ENCODE measurements at regions of chr15 and their contacts with region 1.

Region 1: GRCh38 chr15:44066316-44066740 is 128.7 kb downstream of the FRMD5 start:
- DNase-seq: peak in 1 of 2 donors; percentile 54
- ATAC-seq: peak in 4 of 8 donors; percentile 44 to 65 (median 54)
- H3K4me3 ChIP-seq: no peak overlapping the region
- H3K27ac ChIP-seq: no peak overlapping the region
- H3K4me1 ChIP-seq: peaks cover 0 to 4% (median 0%) of the 10 kb centered on the region in 9 donors
- H3K27me3 ChIP-seq: peaks cover 0 to 6% (median 0%) of the 10 kb centered on the region in 7 donors
- CTCF ChIP-seq: peak; percentile 49 to 78 (median 72)

Region 2: GRCh38 chr15:43872416-43873020 is 193.8 kb before region 1 on chr15:
- intact Hi-C with region 1: loop called in 3 of 10 experiments (anchors 10 kb)
- DNase-seq: peak in 1 of 2 donors; percentile 57
- ATAC-seq: peak; percentile 65 to 81 (median 70)
- H3K4me3 ChIP-seq: no peak overlapping the region
- H3K27ac ChIP-seq: peak overlapping the region in 1 of 10 donors; percentile 36
- H3K4me1 ChIP-seq: peaks cover 0 to 53% (median 3%) of the 10 kb centered on the region in 9 donors
- H3K27me3 ChIP-seq: no peaks in the 10 kb centered on the region
- CTCF ChIP-seq: peak in 8 of 9 donors; percentile 18 to 67 (median 62)

Region 3: GRCh38 chr15:43903864-43904290 is 162.5 kb before region 1 on chr15:
- intact Hi-C with region 1: loop called (anchors 1 to 10 kb)
- DNase-seq: peak in 1 of 2 donors; percentile 50
- ATAC-seq: peak; percentile 65 to 85 (median 80)
- H3K4me3 ChIP-seq: no peak overlapping the region
- H3K27ac ChIP-seq: no peak overlapping the region
- H3K4me1 ChIP-seq: peaks cover 0 to 20% (median 4%) of the 10 kb centered on the region in 9 donors
- H3K27me3 ChIP-seq: peaks cover 0 to 4% (median 0%) of the 10 kb centered on the region in 7 donors
- CTCF ChIP-seq: peak; percentile 64 to 88 (median 84)

Region 4: DNA sequence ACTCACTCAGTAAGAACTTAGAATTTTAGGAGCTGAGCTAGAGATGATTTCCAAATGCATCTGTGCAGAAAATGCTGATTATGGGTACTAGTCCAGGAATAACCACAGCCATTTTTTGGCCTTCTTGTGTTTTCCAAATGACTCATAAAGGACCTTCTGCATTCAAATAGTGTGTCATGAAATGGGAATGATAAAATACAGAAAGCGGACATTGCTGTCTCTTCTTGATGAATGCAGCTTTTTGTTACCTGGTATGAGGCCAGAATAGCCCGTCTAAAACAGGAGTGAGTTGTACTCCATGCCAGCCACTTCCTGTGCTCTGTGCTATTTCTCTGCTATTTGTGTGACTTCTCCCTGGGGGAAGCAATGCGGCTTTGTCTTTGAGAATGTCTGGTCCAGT is 149.3 kb after region 1 on chr15:
- intact Hi-C with region 1: loop called in 2 of 10 experiments (anchors 5 to 10 kb)
- DNase-seq: no peak
- ATAC-seq: no peak
- H3K4me3 ChIP-seq: no peak overlapping the region
- H3K27ac ChIP-seq: no peak overlapping the region
- H3K4me1 ChIP-seq: no peaks in the 10 kb centered on the region
- H3K27me3 ChIP-seq: peaks cover 0 to 14% (median 3%) of the 10 kb centered on the region in 7 donors
- CTCF ChIP-seq: no peak

Region 5: GRCh38 chr15:44222478-44222877 is 156.2 kb after region 1 on chr15:
- intact Hi-C with region 1: loop called in 2 of 10 experiments (anchors 5 to 10 kb)
- DNase-seq: no peak
- ATAC-seq: no peak
- H3K4me3 ChIP-seq: no peak overlapping the region
- H3K27ac ChIP-seq: no peak overlapping the region
- H3K4me1 ChIP-seq: no peaks in the 10 kb centered on the region
- H3K27me3 ChIP-seq: peaks cover 0 to 6% (median 0%) of the 10 kb centered on the region in 7 donors
- CTCF ChIP-seq: no peak

Measured in heart right ventricle (tissue), 16 donors.